Gastrocnemius medialis (tissue), 4 donors: ENCODE measurements at regions of chr1 and their contacts with region 1.

Region 1: GRCh38 chr1:228281933-228282645 is 74.2 kb downstream of the OBSCN start:
- DNase-seq: peak; percentile 69 to 90
- ATAC-seq: peak; percentile 65 to 79
- H3K4me3 ChIP-seq: no peak overlapping the region
- H3K27ac ChIP-seq: peak overlapping the region; percentile 79 to 89 (median 86)
- H3K4me1 ChIP-seq: peaks cover 0 to 13% of the 10 kb centered on the region in 2 donors
- H3K27me3 ChIP-seq: no peaks in the 10 kb centered on the region
- CTCF ChIP-seq: no peak
- POLR2A ChIP-seq: no peak

Region 2: GRCh38 chr1:227924833-227925574 is 357.1 kb before region 1 on chr1:
- in situ Hi-C with region 1: no loop called
- intact Hi-C with region 1: no loop called
- DNase-seq: no peak
- ATAC-seq: no peak
- H3K4me3 ChIP-seq: no peak overlapping the region
- H3K27ac ChIP-seq: no peak overlapping the region
- H3K4me1 ChIP-seq: peaks cover 0 to 17% of the 10 kb centered on the region in 2 donors
- H3K27me3 ChIP-seq: no peaks in the 10 kb centered on the region
- CTCF ChIP-seq: no peak
- POLR2A ChIP-seq: no peak

Region 3: DNA sequence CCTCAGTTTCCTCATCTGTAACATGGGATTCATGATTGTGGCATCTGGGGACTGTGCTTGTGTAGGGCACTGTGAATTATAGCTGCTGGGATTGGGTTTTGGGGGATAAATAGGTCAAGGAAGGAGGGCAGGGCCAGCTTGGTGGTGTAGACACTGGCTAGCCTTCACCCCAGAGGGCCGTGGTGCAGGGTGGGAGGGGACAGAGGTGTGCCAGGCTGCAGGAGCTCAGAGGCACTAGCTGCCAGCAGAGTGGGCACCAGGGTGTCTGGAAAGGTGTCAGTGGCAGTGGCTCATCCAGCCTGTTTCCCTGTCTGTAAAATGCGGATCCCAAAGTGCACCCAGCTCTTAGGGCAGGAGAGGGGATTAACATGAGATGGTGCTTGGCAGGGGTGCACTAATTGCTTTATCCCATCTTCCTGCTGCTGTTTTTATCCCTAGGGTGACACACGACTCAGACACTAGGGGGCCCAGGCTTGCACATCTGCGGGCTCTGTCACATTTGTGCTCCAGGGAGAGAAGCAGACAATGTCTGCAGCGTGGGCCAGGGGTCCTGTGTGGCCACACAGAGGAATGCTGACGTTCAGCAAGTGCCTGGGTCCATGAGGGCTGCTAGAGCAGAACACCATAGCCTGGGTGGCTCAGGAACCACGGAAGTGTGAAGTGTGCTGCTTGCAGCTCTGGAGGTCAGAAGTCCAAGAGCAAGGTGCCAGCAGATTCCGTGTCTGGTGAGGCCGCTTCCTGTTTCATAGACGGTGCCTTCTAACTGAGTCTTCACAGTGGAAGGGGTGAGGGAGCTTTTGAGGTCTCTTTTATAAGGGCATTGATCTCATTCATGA is 54.9 kb before region 1 on chr1:
- in situ Hi-C with region 1: no loop called
- intact Hi-C with region 1: loop called (anchors 5 kb)
- DNase-seq: peak in 1 of 2 donors; percentile 80
- ATAC-seq: peak; percentile 8 to 60
- H3K4me3 ChIP-seq: peak overlapping the region in 1 of 4 donors; percentile 26
- H3K27ac ChIP-seq: peak overlapping the region; percentile 97 to 100 (median 100)
- H3K4me1 ChIP-seq: peaks cover 87 to 93% of the 10 kb centered on the region in 2 donors
- H3K27me3 ChIP-seq: no peaks in the 10 kb centered on the region
- CTCF ChIP-seq: peak; percentile 14 to 52 (median 42)
- POLR2A ChIP-seq: no peak